ENCODE measurements at regions of chr1 and their contacts with region 1.

Region 1: GRCh38 chr1:27102707-27103491 is 52.0 kb downstream of the SLC9A1 start:
- DNase-seq: peak; percentile 86
- ATAC-seq: peak; percentile 81
- H3K4me3 Mint-ChIP-seq: no peak overlapping the region
- H3K27ac Mint-ChIP-seq: no peak overlapping the region
- H3K4me1 Mint-ChIP-seq: peaks cover 23% of the 10 kb centered on the region
- H3K27me3 Mint-ChIP-seq: no peaks in the 10 kb centered on the region
- CTCF ChIP-seq: peak; percentile 93

Region 2: DNA sequence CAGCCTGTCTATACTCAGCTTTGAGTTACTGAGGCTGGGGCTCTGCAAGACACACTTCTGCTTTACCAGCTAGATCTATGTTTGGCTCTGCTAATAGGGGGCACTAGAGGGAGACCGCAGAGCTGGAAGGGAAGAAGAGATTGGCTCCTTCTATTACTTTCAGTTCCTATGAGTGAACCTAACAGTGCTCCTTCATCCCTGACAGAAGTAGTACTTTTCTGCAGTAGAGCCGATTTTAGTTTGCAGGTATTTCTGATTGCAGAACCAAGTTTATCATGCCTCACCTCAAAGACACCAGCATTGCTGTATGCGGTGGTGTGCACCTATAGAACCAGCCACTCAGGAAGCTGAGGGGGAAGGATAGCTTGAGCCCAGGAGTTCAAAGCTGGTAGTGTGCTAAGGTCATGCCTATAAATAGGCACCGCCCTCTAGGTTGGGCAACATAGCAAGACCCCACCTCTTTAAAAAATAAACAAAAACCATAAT is 282.1 kb before region 1 on chr1:
- CTCF ChIA-PET with region 1: no interaction called
- POLR2A ChIA-PET with region 1: no interaction called
- intact Hi-C with region 1: no loop called
- DNase-seq: peak; percentile 49
- ATAC-seq: peak; percentile 86
- H3K4me3 Mint-ChIP-seq: peak overlapping the region; percentile 50
- H3K27ac Mint-ChIP-seq: peak overlapping the region; percentile 80
- H3K4me1 Mint-ChIP-seq: peaks cover 22% of the 10 kb centered on the region
- H3K27me3 Mint-ChIP-seq: no peaks in the 10 kb centered on the region
- CTCF ChIP-seq: peak; percentile 22

Region 3: GRCh38 chr1:27154991-27155781 is 52.3 kb after region 1 on chr1 and contains the start of gene SLC9A1:
- CTCF ChIA-PET with region 1: interaction called, 13 read pairs
- POLR2A ChIA-PET with region 1: no interaction called
- intact Hi-C with region 1: loop called (anchors 5 kb)
- DNase-seq: peak; percentile 91
- ATAC-seq: peak; percentile 94
- H3K4me3 Mint-ChIP-seq: peak within 1 kb of the TSS; percentile 79
- H3K27ac Mint-ChIP-seq: peak within 1 kb of the TSS; percentile 96
- H3K4me1 Mint-ChIP-seq: peaks cover 46% of the 10 kb centered on the region
- H3K27me3 Mint-ChIP-seq: no peaks in the 10 kb centered on the region
- CTCF ChIP-seq: peak; percentile 88
- total RNA-seq, gene SLC9A1: 14.8 to 15.3 TPM

Region 4: DNA sequence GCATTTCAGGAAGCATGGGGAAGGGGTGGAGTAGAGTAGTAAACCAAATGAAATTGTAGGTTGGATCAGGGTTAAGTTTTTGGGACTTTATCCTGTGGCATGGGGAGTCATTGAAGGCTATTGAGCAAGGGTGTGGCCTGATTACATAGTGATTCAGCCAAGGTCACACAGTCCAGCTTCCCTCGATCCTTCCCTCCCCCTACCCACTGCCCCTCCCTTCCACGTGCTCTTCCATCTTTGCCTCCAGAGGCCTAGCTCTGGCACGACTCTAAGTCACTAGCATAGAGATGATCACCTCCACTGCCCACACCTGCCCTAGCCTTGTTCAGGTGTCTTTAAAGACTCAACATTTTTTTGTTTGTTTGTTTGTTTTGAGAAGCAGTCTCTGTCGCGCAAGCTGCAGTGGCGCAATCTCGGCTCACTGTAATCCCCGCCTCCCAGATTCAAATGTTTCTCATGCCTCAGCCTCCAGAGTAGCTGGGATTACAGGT is 89.2 kb after region 1 on chr1:
- CTCF ChIA-PET with region 1: interaction called, 50 read pairs
- POLR2A ChIA-PET with region 1: no interaction called
- intact Hi-C with region 1: no loop called
- DNase-seq: no peak
- ATAC-seq: no peak
- H3K4me3 Mint-ChIP-seq: no peak overlapping the region
- H3K27ac Mint-ChIP-seq: no peak overlapping the region
- H3K4me1 Mint-ChIP-seq: no peaks in the 10 kb centered on the region
- H3K27me3 Mint-ChIP-seq: no peaks in the 10 kb centered on the region
- CTCF ChIP-seq: no peak

Region 5: GRCh38 chr1:27203946-27204345 is 101.0 kb after region 1 on chr1:
- CTCF ChIA-PET with region 1: interaction called, 50 read pairs
- POLR2A ChIA-PET with region 1: no interaction called
- intact Hi-C with region 1: no loop called
- DNase-seq: no peak
- ATAC-seq: no peak
- H3K4me3 Mint-ChIP-seq: no peak overlapping the region
- H3K27ac Mint-ChIP-seq: no peak overlapping the region
- H3K4me1 Mint-ChIP-seq: no peaks in the 10 kb centered on the region
- H3K27me3 Mint-ChIP-seq: no peaks in the 10 kb centered on the region
- CTCF ChIP-seq: no peak

Region 6: DNA sequence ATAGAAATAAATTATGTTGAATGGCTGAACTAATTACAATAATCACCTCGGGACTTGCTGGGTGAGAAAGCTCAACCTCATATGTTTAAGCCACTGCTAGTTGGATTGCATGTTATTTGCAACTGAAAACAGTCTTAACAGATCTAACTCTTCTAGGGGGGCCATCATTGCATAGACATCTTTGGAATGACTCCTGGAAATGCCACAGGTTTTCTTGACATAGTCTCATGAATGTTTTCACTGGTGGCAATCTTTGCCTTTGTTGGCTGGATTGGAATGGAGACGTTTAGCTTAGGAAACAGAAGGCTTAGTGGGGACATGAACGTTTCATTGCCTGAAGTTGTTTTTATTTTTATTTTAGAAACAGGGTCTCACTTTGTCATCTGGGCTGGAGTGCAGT is 122.7 kb after region 1 on chr1:
- CTCF ChIA-PET with region 1: interaction called, 11 read pairs
- POLR2A ChIA-PET with region 1: interaction called, 3 read pairs
- intact Hi-C with region 1: no loop called
- DNase-seq: no peak
- ATAC-seq: no peak
- H3K4me3 Mint-ChIP-seq: no peak overlapping the region
- H3K27ac Mint-ChIP-seq: no peak overlapping the region
- H3K4me1 Mint-ChIP-seq: no peaks in the 10 kb centered on the region
- H3K27me3 Mint-ChIP-seq: no peaks in the 10 kb centered on the region
- CTCF ChIP-seq: no peak

Region 7: GRCh38 chr1:27267153-27267552 is 164.3 kb after region 1 on chr1:
- CTCF ChIA-PET with region 1: interaction called, 13 read pairs
- POLR2A ChIA-PET with region 1: no interaction called
- intact Hi-C with region 1: no loop called
- DNase-seq: no peak
- ATAC-seq: no peak
- H3K4me3 Mint-ChIP-seq: no peak overlapping the region
- H3K27ac Mint-ChIP-seq: no peak overlapping the region
- H3K4me1 Mint-ChIP-seq: peaks cover 2% of the 10 kb centered on the region
- H3K27me3 Mint-ChIP-seq: no peaks in the 10 kb centered on the region
- CTCF ChIP-seq: no peak

Region 8: DNA sequence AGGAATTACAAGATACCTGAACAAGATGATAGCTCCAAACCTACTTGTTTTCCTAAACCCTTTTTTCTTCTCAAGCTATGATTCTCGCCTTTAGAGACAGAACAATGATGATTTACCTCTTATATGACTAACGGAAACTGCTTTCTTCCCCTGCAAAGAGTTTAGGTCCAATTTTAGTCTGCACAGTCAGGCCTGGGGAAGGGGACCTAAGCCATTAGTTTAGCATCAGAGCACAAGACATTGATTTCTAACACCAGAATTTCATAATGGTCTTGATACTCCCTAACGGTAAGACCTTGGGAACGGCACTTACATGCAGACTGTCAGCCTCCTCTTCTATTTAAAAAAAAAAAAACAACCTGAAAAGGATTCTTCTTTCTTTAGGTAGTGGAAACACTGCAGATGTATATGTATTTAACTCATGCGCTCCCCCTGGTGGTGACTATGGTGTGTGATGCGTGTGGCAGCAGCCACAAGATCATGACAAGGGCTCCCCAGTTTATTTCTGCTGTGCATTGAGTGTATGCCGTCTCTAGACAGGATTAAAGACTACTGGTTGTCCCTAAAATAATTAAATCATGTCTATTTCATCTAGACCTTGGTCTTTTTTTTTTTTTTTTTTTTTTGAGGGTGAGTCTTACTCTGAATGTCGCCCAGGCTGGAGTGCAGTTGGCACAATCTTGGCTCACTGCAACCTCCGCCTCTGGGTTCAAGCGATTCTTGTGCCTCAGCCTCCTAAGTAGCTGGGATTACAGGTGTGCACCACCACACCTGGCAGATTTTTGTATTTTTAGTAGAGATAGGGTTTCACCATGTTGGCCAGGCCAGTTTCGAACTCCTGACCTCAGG is 181.8 kb after region 1 on chr1:
- CTCF ChIA-PET with region 1: interaction called, 114 read pairs
- POLR2A ChIA-PET with region 1: no interaction called
- intact Hi-C with region 1: loop called (anchors 5 kb)
- DNase-seq: peak; percentile 97
- ATAC-seq: peak; percentile 96
- H3K4me3 Mint-ChIP-seq: no peak overlapping the region
- H3K27ac Mint-ChIP-seq: no peak overlapping the region
- H3K4me1 Mint-ChIP-seq: no peaks in the 10 kb centered on the region
- H3K27me3 Mint-ChIP-seq: no peaks in the 10 kb centered on the region
- CTCF ChIP-seq: peak; percentile 88

Measured in activated CD8-positive, alpha-beta T cell treated with anti-CD3 and anti-CD28 coated beads for 36 hours (primary cell).